ENCODE measurements at regions of chr5 and their contacts with region 1.

Region 1: GRCh38 chr5:74673011-74673790 is 11.8 kb upstream of the HEXB start:
- DNase-seq: no peak
- H3K4me3 Mint-ChIP-seq: no peak overlapping the region
- H3K27ac Mint-ChIP-seq: no peak overlapping the region
- H3K4me1 Mint-ChIP-seq: no peaks in the 10 kb centered on the region
- H3K27me3 Mint-ChIP-seq: peaks cover 23% of the 10 kb centered on the region

Region 2: GRCh38 chr5:74736759-74737158 is 63.6 kb after region 1 on chr5:
- intact Hi-C with region 1: loop called (anchors 5 kb)
- DNase-seq: no peak
- H3K4me3 Mint-ChIP-seq: no peak overlapping the region
- H3K27ac Mint-ChIP-seq: no peak overlapping the region
- H3K4me1 Mint-ChIP-seq: no peaks in the 10 kb centered on the region
- H3K27me3 Mint-ChIP-seq: no peaks in the 10 kb centered on the region

Measured in activated CD4-positive, alpha-beta T cell treated with anti-CD3 and anti-CD28 coated beads, Interleukin-2, amount 10 ng/mL, durations not matched to agents 24 days and 14 days (primary cell).